A673 (cell line): ENCODE measurements at regions of chr1 and their contacts with region 1.

Region 1: GRCh38 chr1:88891318-88891950 is at the start of gene GTF2B:
- DNase-seq: peak; percentile 96
- H3K4me3 ChIP-seq: peak within 1 kb of the TSS; percentile 79
- H3K27ac ChIP-seq: peak within 1 kb of the TSS; percentile 84
- H3K4me1 ChIP-seq: peaks cover 8% of the 10 kb centered on the region
- H3K27me3 ChIP-seq: no peaks in the 10 kb centered on the region
- CTCF ChIP-seq: no peak
- total RNA-seq, gene GTF2B: 28.9 and 31.9 TPM in 2 replicates

Region 2: GRCh38 chr1:88462488-88463261 is 428.8 kb before region 1 on chr1:
- CTCF ChIA-PET with region 1: no interaction called
- POLR2A ChIA-PET with region 1: no interaction called
- intact Hi-C with region 1: no loop called
- DNase-seq: peak; percentile 56
- H3K4me3 ChIP-seq: peak overlapping the region; percentile 37
- H3K27ac ChIP-seq: no peak overlapping the region
- H3K4me1 ChIP-seq: peaks cover 6% of the 10 kb centered on the region
- H3K27me3 ChIP-seq: peaks cover 27% of the 10 kb centered on the region
- CTCF ChIP-seq: no peak

Region 3: DNA sequence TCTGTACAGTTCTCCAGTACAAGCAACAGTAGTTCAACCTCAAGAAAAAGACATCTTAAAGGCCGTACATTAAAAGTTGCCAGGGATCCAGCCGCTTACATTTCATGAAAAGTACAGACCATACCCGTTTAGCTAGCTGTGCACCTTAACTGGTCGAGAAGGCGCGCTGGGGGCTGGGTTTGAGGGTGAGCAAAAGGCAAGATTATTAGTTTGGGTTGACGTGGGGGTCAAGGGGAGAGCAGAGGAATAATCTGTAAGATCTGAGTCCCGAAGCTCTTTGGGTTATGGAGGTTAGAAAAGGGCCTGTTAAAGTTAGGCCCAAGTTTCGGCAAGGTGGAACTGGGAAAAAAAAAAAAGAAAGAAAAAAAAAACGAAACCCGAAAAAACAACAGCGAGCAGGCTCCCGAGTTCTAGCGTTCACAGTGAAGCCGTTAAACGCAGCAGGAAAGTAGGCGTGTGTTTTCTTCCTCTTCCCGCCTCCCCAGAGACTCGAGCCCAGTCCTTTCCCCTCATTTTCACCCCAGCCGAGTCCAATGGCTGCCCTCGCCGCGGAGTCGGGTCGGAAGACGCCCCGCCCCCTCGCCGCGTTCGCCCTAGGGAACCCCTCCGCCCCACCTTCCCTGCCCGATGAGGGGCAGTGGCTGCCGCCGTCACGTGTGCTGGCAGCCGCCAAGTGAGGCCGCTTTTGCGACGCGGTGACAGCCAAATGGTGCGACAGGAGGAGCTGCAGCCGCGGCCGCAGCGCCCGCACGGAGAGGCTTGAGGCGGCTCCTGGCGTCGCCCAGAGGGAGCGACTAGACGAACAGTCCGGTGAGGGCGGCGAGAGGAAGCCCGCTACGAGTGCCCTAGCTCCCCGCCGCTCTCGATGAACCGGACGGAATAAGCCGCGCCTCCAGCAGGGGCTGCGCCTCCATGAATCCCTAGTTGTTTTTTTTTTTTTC is 207.6 kb before region 1 on chr1 and contains the start of gene PKN2:
- CTCF ChIA-PET with region 1: no interaction called
- POLR2A ChIA-PET with region 1: no interaction called
- intact Hi-C with region 1: loop called (anchors 5 kb)
- DNase-seq: peak; percentile 100
- H3K4me3 ChIP-seq: peak within 1 kb of the TSS; percentile 85
- H3K27ac ChIP-seq: peak within 1 kb of the TSS; percentile 92
- H3K4me1 ChIP-seq: peaks cover 20% of the 10 kb centered on the region
- H3K27me3 ChIP-seq: no peaks in the 10 kb centered on the region
- CTCF ChIP-seq: peak; percentile 25; the same call in 1 of the 2 replicates
- total RNA-seq, gene PKN2: 54.1 and 55.6 TPM in 2 replicates